ENCODE measurements at regions of chr5 and their contacts with region 1.

Region 1: DNA sequence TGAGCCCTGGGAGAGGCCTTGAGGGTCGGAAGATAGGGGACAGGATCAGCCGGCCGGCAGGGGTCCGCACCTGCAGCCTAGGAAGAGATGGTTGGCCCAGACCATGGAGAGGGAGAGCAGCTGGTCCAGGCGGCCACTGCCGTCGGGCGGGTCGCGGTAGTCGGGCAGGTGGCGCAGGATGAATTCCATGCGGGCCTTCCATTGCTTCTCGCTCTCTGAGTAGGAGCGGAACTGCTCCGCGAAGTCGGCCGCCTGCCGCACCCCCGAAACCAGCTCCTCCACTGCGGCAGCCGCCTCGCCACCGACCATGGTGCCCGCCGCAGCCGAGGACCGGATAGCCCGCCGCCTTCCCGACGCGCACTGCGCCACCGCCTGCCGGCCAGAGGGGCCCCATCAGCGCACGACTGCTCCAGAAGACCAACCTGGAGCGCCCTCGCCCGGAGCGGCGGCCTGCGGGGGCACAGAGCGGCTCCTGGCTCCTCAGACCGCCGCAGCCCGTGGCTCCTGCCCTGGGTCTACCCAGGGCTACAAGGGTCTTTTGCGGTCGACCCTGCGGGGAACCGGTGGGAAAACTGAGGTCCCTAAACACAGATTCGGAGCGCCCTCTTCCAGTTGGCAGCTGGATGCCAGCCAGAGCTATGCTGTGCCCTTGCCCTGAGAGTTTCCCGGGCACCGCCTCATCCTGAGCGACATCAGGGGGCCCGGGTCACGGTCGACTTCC is at the start of gene CDKN2AIPNL:
- DNase-seq: peak; percentile 88 to 94
- ATAC-seq: peak; percentile 99
- H3K4me3 ChIP-seq: peak within 1 kb of the TSS; percentile 61
- H3K27ac ChIP-seq: peak within 1 kb of the TSS; percentile 93 to 94
- H3K4me1 ChIP-seq: peaks cover 36% of the 10 kb centered on the region
- CTCF ChIP-seq: peak; percentile 76
- EP300 ChIP-seq: no peak
- POLR2A ChIP-seq: peak; percentile 83
- RAD21 ChIP-seq: peak; percentile 67 to 87
- polyA plus RNA-seq, gene CDKN2AIPNL: 42.4 and 49.9 TPM in 2 replicates

Region 2: DNA sequence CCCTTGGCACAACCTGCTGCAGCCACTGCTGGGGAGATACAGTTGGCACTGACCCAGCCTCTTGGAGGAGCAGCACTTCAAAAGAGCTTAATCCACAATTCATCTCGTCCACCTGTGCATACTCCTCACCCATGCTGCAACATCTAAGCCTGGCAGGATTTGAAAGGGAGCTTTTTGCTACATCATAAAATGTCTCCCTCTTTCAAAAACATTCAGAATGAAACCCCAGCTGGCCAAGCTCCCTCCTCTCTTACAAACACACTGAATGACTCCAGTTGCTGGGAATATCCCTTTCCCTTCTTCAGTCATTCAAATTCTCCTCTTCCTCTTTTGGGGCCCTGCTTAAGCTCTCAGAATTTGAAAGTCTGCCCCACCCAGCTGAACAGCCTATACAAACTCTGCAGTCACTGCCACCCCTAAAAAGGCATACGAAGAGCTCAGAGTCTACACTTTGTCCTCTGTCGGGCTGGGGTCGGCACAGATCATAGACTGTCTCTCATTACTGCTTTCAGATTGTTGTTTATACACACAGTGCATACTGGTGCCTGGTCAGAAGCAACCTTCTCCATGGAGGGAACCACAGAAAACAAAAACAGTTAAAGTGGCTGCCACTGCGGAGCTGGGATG is 434.4 kb before region 1 on chr5:
- CTCF ChIA-PET with region 1: no interaction called
- POLR2A ChIA-PET with region 1: no interaction called
- DNase-seq: no peak
- ATAC-seq: peak in 1 of 2 experiments; percentile 7; a peak in 2 of 6 replicates
- H3K4me3 ChIP-seq: no peak overlapping the region
- H3K27ac ChIP-seq: peak overlapping the region; percentile 70 to 82; a peak in 5 of 6 replicates
- H3K4me1 ChIP-seq: peaks cover 27% of the 10 kb centered on the region
- CTCF ChIP-seq: no peak
- EP300 ChIP-seq: no peak
- POLR2A ChIP-seq: no peak
- RAD21 ChIP-seq: no peak

Region 3: DNA sequence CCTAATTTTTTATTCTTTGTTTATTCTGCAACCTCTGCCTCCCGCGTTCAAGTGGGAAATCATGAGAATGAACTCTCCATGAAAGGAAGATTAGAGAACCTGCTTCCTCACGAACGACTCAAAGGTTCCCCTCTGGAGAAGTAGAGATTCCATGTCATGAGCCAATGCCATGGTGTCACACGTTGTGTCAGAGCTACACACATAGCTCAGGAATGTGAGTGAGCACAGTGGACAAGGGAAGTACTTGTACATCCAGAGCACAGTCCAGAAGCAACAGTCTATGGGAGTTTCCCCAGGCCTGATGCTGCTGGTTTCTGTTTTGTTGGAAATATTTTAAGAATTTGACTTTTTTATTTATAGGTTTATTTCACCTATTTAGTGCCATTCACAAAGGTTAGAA is 159.0 kb before region 1 on chr5:
- CTCF ChIA-PET with region 1: no interaction called
- POLR2A ChIA-PET with region 1: no interaction called
- DNase-seq: peak; percentile 75 to 80
- ATAC-seq: peak; percentile 87 to 92
- H3K4me3 ChIP-seq: no peak overlapping the region
- H3K27ac ChIP-seq: peak overlapping the region in 1 of 2 experiments; percentile 5; a peak in 2 of 6 replicates
- H3K4me1 ChIP-seq: peaks cover 31% of the 10 kb centered on the region
- CTCF ChIP-seq: no peak
- EP300 ChIP-seq: no peak
- POLR2A ChIP-seq: no peak
- RAD21 ChIP-seq: no peak

Region 4: GRCh38 chr5:134370871-134371833 is 40.6 kb before region 1 on chr5 and contains the start of gene UBE2B:
- CTCF ChIA-PET with region 1: interaction called, 16 read pairs
- POLR2A ChIA-PET with region 1: interaction called, 3 read pairs
- DNase-seq: peak; percentile 94 to 100
- ATAC-seq: peak; percentile 80 to 81
- H3K4me3 ChIP-seq: peak within 1 kb of the TSS; percentile 81
- H3K27ac ChIP-seq: peak within 1 kb of the TSS; percentile 91 to 98
- H3K4me1 ChIP-seq: peaks cover 19% of the 10 kb centered on the region
- CTCF ChIP-seq: no peak
- EP300 ChIP-seq: 0 out of 5 replicates have a peak, but pooled peaks of 1 of the 2 experiments have one; percentile 28
- POLR2A ChIP-seq: no peak; the same call in 1 of the 2 replicates
- RAD21 ChIP-seq: peak in 1 of 2 experiments; percentile 23; a peak in 2 of 5 replicates
- polyA plus RNA-seq, gene UBE2B: 60.1 and 104 TPM in 2 replicates

Region 5: DNA sequence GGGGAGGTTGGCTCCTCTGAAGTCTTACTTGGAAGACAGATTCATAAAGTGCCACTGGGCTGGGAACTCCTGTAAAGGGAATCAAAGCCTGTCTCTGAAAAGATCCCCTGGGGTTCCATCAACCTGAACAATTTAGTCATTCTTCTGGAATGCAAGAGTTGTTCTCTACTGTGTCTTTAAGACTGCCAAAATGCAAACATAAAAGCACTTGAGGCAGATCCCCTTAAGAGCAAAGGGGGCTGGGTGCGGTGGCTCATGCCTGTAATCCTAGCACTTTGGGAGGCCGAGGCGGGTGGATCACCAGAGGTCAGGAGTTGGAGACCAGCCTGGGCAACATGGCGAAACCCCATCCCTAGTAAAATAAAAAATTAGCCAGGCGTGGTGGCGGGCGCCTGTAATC is 16.8 kb before region 1 on chr5:
- CTCF ChIA-PET with region 1: interaction called, 15 read pairs
- POLR2A ChIA-PET with region 1: interaction called, 4 read pairs
- DNase-seq: no peak
- ATAC-seq: no peak
- H3K4me3 ChIP-seq: no peak overlapping the region
- H3K27ac ChIP-seq: no peak overlapping the region
- H3K4me1 ChIP-seq: peaks cover 14% of the 10 kb centered on the region; the same call in 1 of the 3 replicates
- CTCF ChIP-seq: no peak
- EP300 ChIP-seq: no peak
- POLR2A ChIP-seq: no peak
- RAD21 ChIP-seq: no peak

Region 6: DNA sequence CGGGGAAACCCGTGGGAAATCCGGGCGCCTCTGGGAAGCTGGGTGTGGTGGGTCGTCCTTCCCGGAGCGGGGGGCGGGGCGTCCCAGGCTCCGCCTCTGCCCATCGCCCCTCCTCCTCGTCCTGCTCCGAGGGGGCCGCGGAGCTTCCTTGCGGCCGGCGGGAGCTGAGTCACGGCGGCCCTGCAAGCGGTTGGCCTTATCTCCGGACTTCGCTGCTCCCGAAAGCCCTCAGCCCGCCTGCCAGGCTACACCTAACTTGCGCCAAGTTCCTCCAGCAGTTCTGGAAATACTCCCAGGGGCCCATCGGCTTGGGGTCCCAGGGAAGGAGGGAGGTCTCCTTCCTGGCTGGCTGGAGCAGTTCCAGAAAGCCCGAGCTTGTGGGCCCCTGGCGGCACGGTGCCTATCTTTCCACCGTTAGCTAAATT is 54.1 kb after region 1 on chr5:
- CTCF ChIA-PET with region 1: interaction called, 31 read pairs
- POLR2A ChIA-PET with region 1: interaction called, 22 read pairs
- DNase-seq: peak; percentile 89 to 92
- ATAC-seq: peak; percentile 80 to 84
- H3K4me3 ChIP-seq: peak overlapping the region; percentile 72
- H3K27ac ChIP-seq: peak overlapping the region; percentile 99 to 100
- H3K4me1 ChIP-seq: peaks cover 26% of the 10 kb centered on the region
- CTCF ChIP-seq: no peak
- EP300 ChIP-seq: no peak
- POLR2A ChIP-seq: peak; percentile 85
- RAD21 ChIP-seq: peak in 1 of 2 experiments; percentile 6; a peak in 2 of 5 replicates

Region 7: GRCh38 chr5:134511788-134512650 is 100.3 kb after region 1 on chr5:
- CTCF ChIA-PET with region 1: interaction called, 24 read pairs
- POLR2A ChIA-PET with region 1: interaction called, 15 read pairs
- DNase-seq: peak in 1 of 2 experiments; percentile 82
- ATAC-seq: peak; percentile 62 to 72
- H3K4me3 ChIP-seq: no peak overlapping the region
- H3K27ac ChIP-seq: peak overlapping the region; percentile 93 to 94
- H3K4me1 ChIP-seq: peaks cover 68% of the 10 kb centered on the region
- CTCF ChIP-seq: peak; percentile 45
- EP300 ChIP-seq: no peak
- POLR2A ChIP-seq: no peak
- RAD21 ChIP-seq: peak; percentile 61 to 69

Region 8: DNA sequence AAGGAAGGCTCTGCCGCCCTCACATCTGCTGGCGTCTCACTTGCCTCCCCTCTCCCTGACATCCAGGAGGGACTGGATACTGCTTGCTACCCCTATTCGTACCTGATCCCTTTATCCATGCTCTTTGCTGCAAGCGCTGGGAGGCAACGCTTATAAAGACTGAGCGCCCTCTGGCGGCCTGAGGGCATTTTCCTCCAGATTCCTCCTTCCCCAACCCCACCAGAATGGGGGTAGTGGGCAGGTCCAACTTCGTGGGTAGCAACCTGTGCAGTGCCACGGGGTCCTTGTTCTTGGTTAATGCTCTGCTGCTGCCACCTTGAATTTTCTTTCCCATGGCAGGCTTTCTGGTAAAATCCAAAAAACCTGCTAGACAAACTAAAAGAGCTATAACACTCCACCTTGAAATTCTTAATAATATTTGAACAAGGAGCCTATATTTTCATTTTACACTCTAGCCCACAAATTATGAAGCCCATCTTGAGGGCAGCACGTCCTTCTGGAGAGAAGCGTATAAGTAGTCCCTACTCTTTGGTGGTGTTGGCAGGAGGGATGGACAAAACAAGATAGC is 166.2 kb after region 1 on chr5:
- CTCF ChIA-PET with region 1: interaction called, 75 read pairs
- POLR2A ChIA-PET with region 1: no interaction called
- DNase-seq: peak; percentile 77 to 86
- ATAC-seq: peak; percentile 77 to 85
- H3K4me3 ChIP-seq: no peak overlapping the region
- H3K27ac ChIP-seq: peak overlapping the region; percentile 39 to 65; a peak in 4 of 6 replicates
- H3K4me1 ChIP-seq: peaks cover 20% of the 10 kb centered on the region
- CTCF ChIP-seq: peak; percentile 85
- EP300 ChIP-seq: no peak
- POLR2A ChIP-seq: no peak
- RAD21 ChIP-seq: peak; percentile 87 to 90